ENCODE measurements at regions of chr6 and their contacts with region 1.

Region 1: DNA sequence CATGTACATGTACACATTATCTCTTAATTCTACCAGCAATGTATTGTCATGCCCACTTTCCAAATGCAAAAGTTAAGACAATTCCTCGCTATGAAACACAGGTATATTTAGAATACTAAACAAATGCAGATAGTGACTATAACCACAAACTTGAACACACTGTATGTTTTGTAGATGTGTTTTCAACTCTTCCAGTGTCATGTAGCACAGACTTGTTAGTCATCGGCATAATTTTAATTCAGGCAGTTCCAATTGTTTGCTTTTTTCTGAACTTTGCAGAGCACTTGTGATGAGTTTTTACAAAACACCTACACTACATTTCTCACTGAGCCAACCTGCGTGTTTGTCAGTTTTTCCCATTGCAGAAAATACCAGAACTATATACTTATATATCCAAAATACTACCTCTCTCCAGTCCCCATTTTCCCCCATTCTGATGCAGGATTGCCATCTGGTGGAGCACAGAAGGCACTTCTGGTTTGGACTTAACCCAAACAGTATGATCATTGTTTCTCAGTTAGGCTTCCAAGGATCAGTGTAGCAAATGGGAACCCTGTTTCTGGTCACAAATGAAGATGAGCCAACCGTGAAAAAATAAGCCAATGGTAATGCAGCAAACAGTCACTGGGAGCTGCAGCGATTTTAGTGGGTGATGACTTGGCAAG is 143.4 kb downstream of the ADGRB3 start:
- H3K4me3 Mint-ChIP-seq: no peak overlapping the region
- H3K27ac Mint-ChIP-seq: no peak overlapping the region
- H3K4me1 Mint-ChIP-seq: no peaks in the 10 kb centered on the region
- H3K27me3 Mint-ChIP-seq: no peaks in the 10 kb centered on the region

Region 2: DNA sequence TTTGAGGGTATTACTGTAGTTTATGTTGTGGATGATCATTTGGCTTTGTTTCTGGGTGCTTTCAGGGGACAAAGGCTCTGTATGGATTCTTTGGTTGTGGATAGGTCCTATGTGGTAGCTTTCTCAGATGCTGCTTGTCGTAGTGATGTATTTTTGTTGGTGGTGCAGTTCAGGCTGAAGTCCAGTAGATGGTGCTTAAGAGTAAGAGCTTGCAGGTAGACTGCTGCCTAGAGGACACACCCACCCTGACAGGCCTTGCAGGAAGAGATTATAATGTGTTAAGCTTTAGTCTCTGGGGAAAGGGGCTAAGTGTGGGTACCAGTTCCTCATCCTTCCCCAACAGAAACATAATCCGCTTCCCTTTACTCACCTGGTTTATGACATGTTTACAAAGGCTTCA is 206.0 kb before region 1 on chr6:
- intact Hi-C with region 1: loop called (anchors 5 kb)
- H3K4me3 Mint-ChIP-seq: no peak overlapping the region
- H3K27ac Mint-ChIP-seq: no peak overlapping the region
- H3K4me1 Mint-ChIP-seq: peaks cover 7% of the 10 kb centered on the region
- H3K27me3 Mint-ChIP-seq: peaks cover 11% of the 10 kb centered on the region

Region 3: DNA sequence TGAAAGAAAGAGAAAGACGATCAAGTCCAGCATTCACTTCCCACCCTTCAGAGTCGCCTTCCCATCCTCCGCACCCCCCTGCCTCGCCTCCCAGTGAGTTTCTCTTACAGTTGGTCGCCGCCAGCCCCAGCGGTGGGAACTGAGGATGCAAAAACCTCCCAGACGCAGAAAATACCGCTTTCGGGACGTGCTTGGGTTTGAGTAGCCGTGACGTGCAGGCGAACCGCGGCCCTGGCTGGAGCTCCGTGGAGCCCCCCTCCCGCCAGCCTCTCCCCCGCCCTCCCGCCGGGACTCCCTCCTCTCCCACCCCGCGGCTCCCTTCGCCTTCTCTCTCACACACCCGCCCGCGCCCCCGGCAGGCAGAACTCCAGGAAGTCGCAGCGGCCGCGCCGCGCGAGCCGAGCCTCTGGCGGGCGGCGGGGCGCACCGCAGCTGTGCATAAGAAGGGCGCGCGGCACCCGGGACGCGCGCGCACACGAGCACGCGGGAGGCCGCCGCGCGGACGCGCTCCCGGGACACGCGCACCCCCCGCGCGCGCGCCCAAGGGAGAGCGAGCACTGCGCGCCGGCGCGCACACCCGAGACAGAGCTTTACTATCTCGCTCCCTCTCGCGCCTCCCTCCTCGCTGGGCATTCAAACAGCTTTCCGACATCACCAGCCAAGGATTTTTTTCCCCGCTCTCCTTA is 143.6 kb before region 1 on chr6 and contains the start of gene ADGRB3:
- intact Hi-C with region 1: loop called (anchors 1 kb)
- H3K4me3 Mint-ChIP-seq: peak within 1 kb of the TSS; percentile 74
- H3K27ac Mint-ChIP-seq: peak within 1 kb of the TSS; percentile 17
- H3K4me1 Mint-ChIP-seq: peaks cover 29% of the 10 kb centered on the region
- H3K27me3 Mint-ChIP-seq: peaks cover 50% of the 10 kb centered on the region

Region 4: DNA sequence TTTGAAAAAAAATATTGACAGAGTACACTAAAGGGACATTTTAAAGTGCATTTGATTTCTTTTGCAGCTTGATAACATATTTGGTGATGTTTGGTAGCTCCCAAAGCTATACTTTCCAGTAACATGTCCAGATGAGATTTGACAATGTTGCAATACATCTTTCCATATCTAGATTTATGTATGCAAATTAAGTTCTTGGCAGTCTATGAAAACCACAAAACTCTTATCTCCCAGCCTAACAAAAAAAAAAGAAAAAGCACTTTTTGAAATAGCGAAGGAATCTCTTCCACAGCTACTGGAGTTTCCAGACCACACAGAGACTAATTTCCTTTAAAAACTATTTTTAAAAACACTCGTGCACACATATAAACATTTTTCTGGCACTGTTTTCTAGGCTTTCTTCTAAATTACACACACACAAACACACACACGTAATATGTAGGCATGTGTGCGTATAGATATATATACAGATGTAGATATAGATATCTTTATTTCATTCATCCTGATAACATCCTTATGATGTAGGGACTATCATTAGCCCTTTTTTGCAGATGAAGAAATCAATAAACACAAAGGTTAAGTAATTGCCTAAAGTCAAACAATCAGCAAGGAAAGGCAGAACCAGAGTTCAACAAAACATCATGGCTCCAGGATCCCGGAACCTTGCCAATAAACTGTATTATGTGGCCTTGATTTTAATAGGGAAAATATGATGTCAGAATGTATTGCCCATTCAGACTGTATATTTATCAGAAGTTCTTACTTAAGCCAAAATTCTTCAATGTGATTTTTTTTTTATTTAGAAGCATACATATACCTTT is 50.1 kb before region 1 on chr6:
- intact Hi-C with region 1: no loop called
- H3K4me3 Mint-ChIP-seq: no peak overlapping the region
- H3K27ac Mint-ChIP-seq: no peak overlapping the region
- H3K4me1 Mint-ChIP-seq: peaks cover 5% of the 10 kb centered on the region
- H3K27me3 Mint-ChIP-seq: no peaks in the 10 kb centered on the region

Measured in dendritic cell treated with granulocyte-macrophage colony-stimulating factor and Interleukin-4, amounts not matched to agents 40 ng/mL and 50 ng/mL, for 4 days (primary cell).